Caco-2 (cell line): ENCODE measurements at regions of chr7 and their contacts with region 1.

Region 1: GRCh38 chr7:78779788-78780187 is 673.7 kb downstream of the MAGI2 start:
- DNase-seq: no peak
- H3K4me3 ChIP-seq: no peak overlapping the region
- H3K4me3 Mint-ChIP-seq: no peak overlapping the region
- H3K27ac Mint-ChIP-seq: no peak overlapping the region
- H3K4me1 ChIP-seq: no peaks in the 10 kb centered on the region
- H3K4me1 Mint-ChIP-seq: no peaks in the 10 kb centered on the region
- H3K27me3 ChIP-seq: no peaks in the 10 kb centered on the region
- H3K27me3 Mint-ChIP-seq: no peaks in the 10 kb centered on the region
- CTCF ChIP-seq: no peak

Region 2: DNA sequence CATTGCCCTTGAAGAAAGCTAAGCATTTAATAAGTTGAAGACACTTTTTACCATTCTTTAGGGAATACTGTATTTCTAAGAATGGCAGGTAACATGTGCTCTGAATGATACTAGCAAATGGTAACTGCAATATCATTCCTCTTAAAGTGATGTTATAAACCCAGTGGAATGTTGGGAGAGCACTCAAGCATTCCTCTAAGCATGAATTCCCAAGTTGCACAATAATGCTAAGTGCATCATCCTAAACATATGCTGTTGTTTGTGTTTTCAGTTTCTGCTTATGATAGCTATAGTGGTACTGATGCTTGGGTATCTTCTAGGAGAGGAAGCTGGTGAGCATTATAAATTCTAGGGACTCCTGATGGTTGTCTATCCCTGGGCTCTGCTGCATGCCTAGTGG is 307.3 kb before region 1 on chr7:
- CTCF ChIA-PET with region 1: no interaction called
- POLR2A ChIA-PET with region 1: no interaction called
- intact Hi-C with region 1: no loop called
- DNase-seq: no peak
- H3K4me3 ChIP-seq: no peak overlapping the region
- H3K4me3 Mint-ChIP-seq: no peak overlapping the region
- H3K27ac Mint-ChIP-seq: no peak overlapping the region
- H3K4me1 ChIP-seq: no peaks in the 10 kb centered on the region
- H3K4me1 Mint-ChIP-seq: no peaks in the 10 kb centered on the region
- H3K27me3 ChIP-seq: no peaks in the 10 kb centered on the region
- H3K27me3 Mint-ChIP-seq: no peaks in the 10 kb centered on the region
- CTCF ChIP-seq: no peak

Region 3: GRCh38 chr7:78510580-78511188 is 269.1 kb before region 1 on chr7:
- CTCF ChIA-PET with region 1: no interaction called
- POLR2A ChIA-PET with region 1: no interaction called
- intact Hi-C with region 1: loop called (anchors 1 kb)
- DNase-seq: peak in 1 of 2 experiments; percentile 34
- H3K4me3 ChIP-seq: no peak overlapping the region
- H3K4me3 Mint-ChIP-seq: no peak overlapping the region
- H3K27ac Mint-ChIP-seq: no peak overlapping the region
- H3K4me1 ChIP-seq: no peaks in the 10 kb centered on the region
- H3K4me1 Mint-ChIP-seq: no peaks in the 10 kb centered on the region
- H3K27me3 ChIP-seq: no peaks in the 10 kb centered on the region
- H3K27me3 Mint-ChIP-seq: peaks cover 11% of the 10 kb centered on the region
- CTCF ChIP-seq: peak; percentile 58 to 76

Region 4: GRCh38 chr7:78587443-78588044 is 192.2 kb before region 1 on chr7:
- CTCF ChIA-PET with region 1: no interaction called
- POLR2A ChIA-PET with region 1: no interaction called
- intact Hi-C with region 1: loop called (anchors 1 kb)
- DNase-seq: peak in 1 of 2 experiments; percentile 42
- H3K4me3 ChIP-seq: no peak overlapping the region
- H3K4me3 Mint-ChIP-seq: no peak overlapping the region
- H3K27ac Mint-ChIP-seq: no peak overlapping the region
- H3K4me1 ChIP-seq: no peaks in the 10 kb centered on the region
- H3K4me1 Mint-ChIP-seq: no peaks in the 10 kb centered on the region
- H3K27me3 ChIP-seq: no peaks in the 10 kb centered on the region; the same call in 1 of the 2 replicates
- H3K27me3 Mint-ChIP-seq: peaks cover 3% of the 10 kb centered on the region
- CTCF ChIP-seq: peak; percentile 40 to 55

Region 5: DNA sequence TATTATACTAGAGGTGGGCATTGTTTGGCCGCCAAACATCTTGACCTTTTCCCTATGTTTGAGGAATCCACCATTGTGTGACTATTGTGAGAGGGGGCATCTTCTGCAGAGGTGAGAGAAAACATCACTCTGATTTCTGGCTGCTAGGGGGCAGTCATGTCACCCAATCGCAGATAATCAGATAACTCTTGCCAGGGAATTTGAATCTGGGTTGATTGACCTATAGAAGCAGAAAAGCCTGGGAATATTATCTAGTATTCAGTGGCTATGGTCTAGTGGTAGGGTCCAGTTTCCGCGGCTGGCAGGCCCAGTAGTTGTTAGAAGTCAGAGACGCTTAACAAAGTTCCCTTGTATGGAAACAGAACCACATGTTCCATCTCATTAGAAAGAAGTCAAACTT is 172.7 kb before region 1 on chr7:
- CTCF ChIA-PET with region 1: no interaction called
- POLR2A ChIA-PET with region 1: no interaction called
- intact Hi-C with region 1: loop called (anchors 5 kb)
- DNase-seq: peak in 1 of 2 experiments; percentile 7
- H3K4me3 ChIP-seq: no peak overlapping the region
- H3K4me3 Mint-ChIP-seq: no peak overlapping the region
- H3K27ac Mint-ChIP-seq: no peak overlapping the region
- H3K4me1 ChIP-seq: no peaks in the 10 kb centered on the region
- H3K4me1 Mint-ChIP-seq: no peaks in the 10 kb centered on the region
- H3K27me3 ChIP-seq: no peaks in the 10 kb centered on the region
- H3K27me3 Mint-ChIP-seq: no peaks in the 10 kb centered on the region
- CTCF ChIP-seq: peak; percentile 45 to 48